CD4-positive, alpha-beta memory T cell (primary cell): ENCODE measurements at regions of chr11 and their contacts with region 1.

Region 1: GRCh38 chr11:65859200-65859811 is 927 bp upstream of the MUS81 start:
- DNase-seq: peak; percentile 89 to 98 (median 92)
- H3K4me3 ChIP-seq: peak overlapping the region; percentile 55 to 81
- H3K4me3 Mint-ChIP-seq: peak overlapping the region; percentile 93 to 99 (median 96)
- H3K27ac ChIP-seq: peak overlapping the region; percentile 85
- H3K27ac Mint-ChIP-seq: peak overlapping the region; percentile 92 to 99 (median 97)
- H3K4me1 ChIP-seq: peaks cover 58% of the 10 kb centered on the region
- H3K4me1 Mint-ChIP-seq: peaks cover 32 to 64% (median 48%) of the 10 kb centered on the region in 4 donors
- H3K27me3 ChIP-seq: no peaks in the 10 kb centered on the region
- H3K27me3 Mint-ChIP-seq: no peaks in the 10 kb centered on the region

Region 2: DNA sequence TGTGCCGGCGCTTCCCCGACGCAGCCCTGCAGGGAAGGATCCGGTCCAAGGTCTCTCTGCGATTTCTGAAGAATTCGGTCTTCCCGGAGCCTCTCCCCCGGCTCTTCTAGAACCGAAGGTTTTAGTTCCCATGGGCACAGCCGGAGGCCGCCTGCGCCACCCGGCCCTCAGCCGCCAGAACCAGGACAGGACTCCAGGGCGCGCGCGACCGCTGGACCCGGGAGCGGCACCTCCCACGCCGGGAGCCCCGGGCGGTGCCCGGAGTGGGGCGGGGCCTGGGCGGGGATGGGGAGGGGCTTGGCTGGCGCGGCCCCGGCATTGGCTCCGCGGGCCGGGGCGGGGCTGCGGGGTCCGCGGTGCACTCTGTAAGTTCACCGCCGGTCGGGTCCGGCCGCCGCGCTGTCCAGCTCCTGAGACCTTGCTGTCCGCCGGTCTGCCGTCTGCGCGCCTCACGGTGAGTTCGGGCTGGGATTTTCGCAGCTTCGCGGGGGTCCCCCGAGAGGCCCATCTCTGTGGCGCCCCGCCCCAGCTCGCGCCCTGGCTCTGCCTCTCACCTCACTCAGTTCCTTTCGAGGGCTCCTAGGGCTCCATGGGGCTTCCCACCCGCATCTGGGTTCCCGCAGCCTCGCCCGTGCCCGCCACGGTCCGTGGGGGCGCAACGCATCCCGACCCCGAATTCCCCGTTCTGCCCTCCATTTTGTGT is 544.7 kb before region 1 on chr11 and contains the start of gene CDC42EP2:
- CTCF ChIA-PET with region 1: no interaction called
- POLR2A ChIA-PET with region 1: no interaction called
- intact Hi-C with region 1: no loop called
- DNase-seq: peak; percentile 51 to 71 (median 58)
- H3K4me3 ChIP-seq: peak within 1 kb of the TSS; percentile 73 to 74
- H3K4me3 Mint-ChIP-seq: peak within 1 kb of the TSS; percentile 72 to 83 (median 76)
- H3K27ac ChIP-seq: peak within 1 kb of the TSS; percentile 49
- H3K27ac Mint-ChIP-seq: peak within 1 kb of the TSS in 1 of 7 donors; percentile 44
- H3K4me1 ChIP-seq: peaks cover 15% of the 10 kb centered on the region
- H3K4me1 Mint-ChIP-seq: peaks cover 4 to 14% (median 7%) of the 10 kb centered on the region in 4 donors
- H3K27me3 ChIP-seq: no peaks in the 10 kb centered on the region
- H3K27me3 Mint-ChIP-seq: no peaks in the 10 kb centered on the region
- total RNA-seq, gene CDC42EP2: 0.55 to 0.67 TPM

Region 3: GRCh38 chr11:65637794-65638317 is 221.4 kb before region 1 on chr11 and contains the start of gene SIPA1:
- CTCF ChIA-PET with region 1: no interaction called
- POLR2A ChIA-PET with region 1: interaction called, 31 read pairs
- intact Hi-C with region 1: no loop called
- DNase-seq: peak; percentile 63 to 85 (median 74)
- H3K4me3 ChIP-seq: peak within 1 kb of the TSS; percentile 72 to 86
- H3K4me3 Mint-ChIP-seq: peak within 1 kb of the TSS; percentile 90 to 98 (median 96)
- H3K27ac ChIP-seq: peak within 1 kb of the TSS; percentile 94
- H3K27ac Mint-ChIP-seq: peak within 1 kb of the TSS; percentile 97 to 100 (median 99)
- H3K4me1 ChIP-seq: peaks cover 71% of the 10 kb centered on the region
- H3K4me1 Mint-ChIP-seq: peaks cover 24 to 68% (median 46%) of the 10 kb centered on the region in 4 donors
- H3K27me3 ChIP-seq: no peaks in the 10 kb centered on the region
- H3K27me3 Mint-ChIP-seq: no peaks in the 10 kb centered on the region
- total RNA-seq, gene SIPA1: 150 to 169 TPM

Region 4: DNA sequence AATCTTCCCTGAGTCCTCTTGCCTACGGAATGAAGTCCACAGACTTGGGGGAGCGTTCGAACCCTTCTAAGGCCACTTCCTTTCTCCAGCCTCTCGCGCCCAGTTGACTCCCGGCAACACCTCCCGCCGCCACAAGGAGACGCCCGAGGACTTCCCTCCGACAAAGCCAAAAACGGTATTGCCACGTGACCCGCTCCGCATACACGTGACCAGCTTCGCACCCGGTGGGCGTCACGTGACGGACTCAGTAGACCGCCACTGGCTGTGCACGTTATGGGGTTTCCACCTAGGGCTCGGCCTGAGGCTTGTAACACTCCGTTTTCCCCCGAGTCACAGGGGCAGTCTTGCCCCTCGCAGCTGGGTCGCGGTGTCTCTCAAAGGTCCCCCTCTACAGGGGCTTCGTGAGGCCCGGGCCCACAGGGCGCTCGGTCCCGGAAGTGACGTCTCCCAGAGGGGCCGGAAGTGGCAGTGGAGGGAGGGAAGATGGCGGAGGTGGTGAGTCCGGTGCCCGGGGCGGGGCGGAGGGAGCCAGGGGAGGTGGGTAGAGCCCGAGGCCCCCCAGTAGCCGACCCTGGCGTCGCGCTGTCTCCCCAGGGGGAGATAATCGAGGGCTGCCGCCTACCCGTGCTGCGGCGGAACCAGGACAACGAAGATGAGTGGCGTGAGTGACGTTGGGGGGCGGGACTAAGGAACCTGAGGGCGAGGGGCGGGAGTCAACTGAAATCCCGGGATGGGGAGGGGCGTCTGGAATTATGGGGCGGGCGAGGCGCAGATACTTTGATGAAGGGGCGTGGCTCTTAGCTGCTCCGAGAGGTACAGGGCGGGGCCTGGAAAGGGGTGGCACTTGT is 147.3 kb before region 1 on chr11 and contains the start of gene KAT5:
- CTCF ChIA-PET with region 1: interaction called, 4 read pairs
- POLR2A ChIA-PET with region 1: interaction called, 32 read pairs
- intact Hi-C with region 1: loop called (anchors 1 kb)
- DNase-seq: peak; percentile 98 to 100 (median 99)
- H3K4me3 ChIP-seq: peak within 1 kb of the TSS; percentile 63 to 98
- H3K4me3 Mint-ChIP-seq: peak within 1 kb of the TSS; percentile 93 to 99 (median 96)
- H3K27ac ChIP-seq: peak within 1 kb of the TSS; percentile 98
- H3K27ac Mint-ChIP-seq: peak within 1 kb of the TSS; percentile 99 to 100 (median 99)
- H3K4me1 ChIP-seq: peaks cover 19% of the 10 kb centered on the region
- H3K4me1 Mint-ChIP-seq: peaks cover 9 to 38% (median 24%) of the 10 kb centered on the region in 4 donors
- H3K27me3 ChIP-seq: no peaks in the 10 kb centered on the region
- H3K27me3 Mint-ChIP-seq: no peaks in the 10 kb centered on the region
- total RNA-seq, gene KAT5: 93.5 to 106 TPM

Region 5: GRCh38 chr11:65900125-65900898 is 41.0 kb after region 1 on chr11 and contains the start of gene FOSL1:
- CTCF ChIA-PET with region 1: interaction called, 3 read pairs
- POLR2A ChIA-PET with region 1: interaction called, 22 read pairs
- intact Hi-C with region 1: no loop called
- DNase-seq: peak; percentile 91 to 98 (median 92)
- H3K4me3 ChIP-seq: peak within 1 kb of the TSS; percentile 17 to 51
- H3K4me3 Mint-ChIP-seq: peak within 1 kb of the TSS; percentile 57 to 84 (median 65)
- H3K27ac ChIP-seq: peak within 1 kb of the TSS; percentile 46
- H3K27ac Mint-ChIP-seq: peak within 1 kb of the TSS; percentile 69 to 93 (median 88)
- H3K4me1 ChIP-seq: peaks cover 21% of the 10 kb centered on the region
- H3K4me1 Mint-ChIP-seq: peaks cover 5 to 28% (median 7%) of the 10 kb centered on the region in 4 donors
- H3K27me3 ChIP-seq: peaks cover 4% of the 10 kb centered on the region
- H3K27me3 Mint-ChIP-seq: peaks cover 0 to 1% of the 10 kb centered on the region in 2 donors
- total RNA-seq, gene FOSL1: 0.39 to 0.79 TPM

Region 6: GRCh38 chr11:65961232-65961901 is 102.1 kb after region 1 on chr11 and contains the start of gene SART1:
- CTCF ChIA-PET with region 1: interaction called, 3 read pairs
- POLR2A ChIA-PET with region 1: interaction called, 16 read pairs
- intact Hi-C with region 1: loop called (anchors 1 kb)
- DNase-seq: peak; percentile 92 to 98 (median 95)
- H3K4me3 ChIP-seq: peak within 1 kb of the TSS; percentile 70 to 79
- H3K4me3 Mint-ChIP-seq: peak within 1 kb of the TSS; percentile 98 to 99 (median 98)
- H3K27ac ChIP-seq: peak within 1 kb of the TSS; percentile 96
- H3K27ac Mint-ChIP-seq: peak within 1 kb of the TSS; percentile 92 to 100 (median 99)
- H3K4me1 ChIP-seq: peaks cover 42% of the 10 kb centered on the region
- H3K4me1 Mint-ChIP-seq: peaks cover 31 to 61% (median 39%) of the 10 kb centered on the region in 4 donors
- H3K27me3 ChIP-seq: no peaks in the 10 kb centered on the region
- H3K27me3 Mint-ChIP-seq: no peaks in the 10 kb centered on the region
- total RNA-seq, gene SART1: 83.9 to 90.6 TPM

Region 7: GRCh38 chr11:66694732-66695207 is 835.5 kb after region 1 on chr11:
- CTCF ChIA-PET with region 1: no interaction called
- POLR2A ChIA-PET with region 1: no interaction called
- intact Hi-C with region 1: no loop called
- DNase-seq: peak; percentile 76 to 86 (median 79)
- H3K4me3 ChIP-seq: no peak overlapping the region
- H3K4me3 Mint-ChIP-seq: no peak overlapping the region
- H3K27ac ChIP-seq: no peak overlapping the region
- H3K27ac Mint-ChIP-seq: no peak overlapping the region
- H3K4me1 ChIP-seq: no peaks in the 10 kb centered on the region
- H3K4me1 Mint-ChIP-seq: no peaks in the 10 kb centered on the region
- H3K27me3 ChIP-seq: no peaks in the 10 kb centered on the region
- H3K27me3 Mint-ChIP-seq: peaks cover 2% of the 10 kb centered on the region in 2 donors